ENCODE measurements at regions of chr7 and their contacts with region 1.

Region 1: DNA sequence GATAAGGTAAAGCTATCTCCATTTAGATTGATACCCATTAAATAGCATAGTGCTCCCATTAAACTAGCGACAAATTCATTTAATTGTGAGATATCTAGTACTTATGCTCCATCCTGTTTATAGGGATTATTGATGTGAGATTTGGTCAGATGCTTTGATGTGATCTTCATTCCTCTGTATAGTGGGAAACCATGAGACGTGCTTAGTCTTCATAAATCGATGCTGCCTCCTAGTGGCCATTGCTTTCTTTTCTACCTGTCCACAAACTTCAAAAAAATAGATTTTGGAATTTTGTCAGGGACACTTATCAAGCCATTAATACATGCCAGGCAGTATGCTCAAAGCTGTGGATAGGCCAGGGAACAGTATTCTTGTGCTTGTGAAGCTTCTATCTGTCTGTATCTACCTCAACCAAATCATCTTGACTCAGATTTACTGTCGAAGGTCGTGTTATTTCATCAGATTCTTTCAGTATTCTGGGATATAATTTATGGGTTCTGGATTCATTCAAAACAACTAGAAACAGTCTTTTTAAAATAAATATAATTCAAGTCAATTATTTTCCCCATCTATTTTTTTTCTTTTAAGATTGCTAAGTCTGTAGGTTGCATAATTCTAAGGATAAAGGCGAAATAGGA is 12.0 kb downstream of the LSM8 start:
- DNase-seq: peak; percentile 70
- ATAC-seq: peak; percentile 88
- H3K4me3 ChIP-seq: no peak overlapping the region
- H3K27ac ChIP-seq: no peak overlapping the region
- H3K4me1 ChIP-seq: no peaks in the 10 kb centered on the region
- H3K27me3 ChIP-seq: no peaks in the 10 kb centered on the region
- CTCF ChIP-seq: peak; percentile 72
- POLR2A ChIP-seq: no peak
- RAD21 ChIP-seq: peak; percentile 59

Region 2: DNA sequence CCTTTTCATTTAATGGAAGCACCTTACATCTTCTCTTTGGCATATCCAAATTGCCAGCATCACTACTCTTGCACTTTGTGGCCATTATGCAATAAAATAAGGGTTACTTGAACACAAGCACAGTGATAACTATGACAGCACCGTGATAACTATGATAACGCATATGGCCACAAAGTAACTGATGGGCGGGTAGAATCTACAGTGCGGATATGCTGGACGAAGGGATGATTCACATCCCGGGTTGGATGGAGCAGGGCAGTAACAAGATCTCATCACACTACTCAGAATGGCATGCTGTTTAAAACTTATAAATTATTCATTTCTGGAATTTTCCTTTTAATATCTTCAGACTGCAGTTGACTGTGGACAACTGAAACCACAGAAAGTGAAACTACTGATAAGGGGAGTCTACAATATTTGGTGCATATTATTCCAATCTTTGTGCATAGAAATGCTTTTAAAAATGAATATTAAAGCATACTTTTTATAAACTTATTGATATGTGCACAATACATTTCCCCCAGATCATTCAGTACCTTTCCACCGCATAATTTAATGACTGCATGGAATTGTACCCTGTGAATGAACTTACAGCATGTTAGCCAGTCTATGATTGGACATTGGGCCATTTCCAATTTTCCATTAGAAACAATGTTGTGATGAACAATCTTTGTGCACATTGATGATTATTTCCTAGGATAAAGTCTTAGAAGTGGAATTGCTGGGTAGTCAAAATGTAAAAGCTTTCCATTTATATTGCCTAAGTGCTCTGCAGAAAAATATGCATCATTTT is 1009.5 kb before region 1 on chr7:
- CTCF ChIA-PET with region 1: no interaction called
- POLR2A ChIA-PET with region 1: no interaction called
- dilution Hi-C with region 1: no loop called
- in situ Hi-C with region 1: no loop called
- intact Hi-C with region 1: no loop called
- DNase-seq: peak; percentile 85
- ATAC-seq: peak; percentile 86
- H3K4me3 ChIP-seq: no peak overlapping the region
- H3K27ac ChIP-seq: no peak overlapping the region
- H3K4me1 ChIP-seq: 0 out of 2 replicates have a peak, but pooled peaks cover 1% of the 10 kb centered on the region
- H3K27me3 ChIP-seq: no peaks in the 10 kb centered on the region
- CTCF ChIP-seq: no peak
- POLR2A ChIP-seq: no peak
- RAD21 ChIP-seq: no peak

Region 3: GRCh38 chr7:117741962-117742361 is 454.0 kb before region 1 on chr7:
- CTCF ChIA-PET with region 1: no interaction called
- POLR2A ChIA-PET with region 1: no interaction called
- dilution Hi-C with region 1: no loop called
- in situ Hi-C with region 1: loop called (anchors 10 kb)
- intact Hi-C with region 1: no loop called
- DNase-seq: peak; percentile 80
- ATAC-seq: peak; percentile 90
- H3K4me3 ChIP-seq: no peak overlapping the region
- H3K27ac ChIP-seq: no peak overlapping the region
- H3K4me1 ChIP-seq: peaks cover 7% of the 10 kb centered on the region
- H3K27me3 ChIP-seq: no peaks in the 10 kb centered on the region
- CTCF ChIP-seq: no peak
- POLR2A ChIP-seq: no peak
- RAD21 ChIP-seq: no peak

Region 4: GRCh38 chr7:118245267-118246040 is 49.5 kb after region 1 on chr7:
- CTCF ChIA-PET with region 1: no interaction called
- POLR2A ChIA-PET with region 1: no interaction called
- dilution Hi-C with region 1: no loop called
- in situ Hi-C with region 1: no loop called
- intact Hi-C with region 1: no loop called
- DNase-seq: no peak
- ATAC-seq: no peak
- H3K4me3 ChIP-seq: no peak overlapping the region
- H3K27ac ChIP-seq: no peak overlapping the region
- H3K4me1 ChIP-seq: no peaks in the 10 kb centered on the region
- H3K27me3 ChIP-seq: no peaks in the 10 kb centered on the region
- CTCF ChIP-seq: no peak
- POLR2A ChIP-seq: no peak
- RAD21 ChIP-seq: no peak

Measured in IMR-90 (cell line).